CD4-positive, alpha-beta T cell (primary cell): ENCODE measurements at regions of chr5 and their contacts with region 1.

Region 1: GRCh38 chr5:157540707-157541446 is 34.7 kb downstream of the ADAM19 start:
- DNase-seq: peak in 10 of 14 experiments; percentile 5 to 74 (median 22)
- ATAC-seq: peak; percentile 61
- H3K4me3 ChIP-seq: peak overlapping the region; percentile 42
- H3K4me3 Mint-ChIP-seq: peak overlapping the region; percentile 62
- H3K27ac ChIP-seq: peak overlapping the region; percentile 61 to 83
- H3K27ac Mint-ChIP-seq: peak overlapping the region; percentile 87
- H3K4me1 ChIP-seq: peaks cover 73% of the 10 kb centered on the region
- H3K4me1 Mint-ChIP-seq: peaks cover 76% of the 10 kb centered on the region
- H3K27me3 ChIP-seq: no peaks in the 10 kb centered on the region
- H3K27me3 Mint-ChIP-seq: no peaks in the 10 kb centered on the region
- CTCF ChIP-seq: no peak

Region 2: DNA sequence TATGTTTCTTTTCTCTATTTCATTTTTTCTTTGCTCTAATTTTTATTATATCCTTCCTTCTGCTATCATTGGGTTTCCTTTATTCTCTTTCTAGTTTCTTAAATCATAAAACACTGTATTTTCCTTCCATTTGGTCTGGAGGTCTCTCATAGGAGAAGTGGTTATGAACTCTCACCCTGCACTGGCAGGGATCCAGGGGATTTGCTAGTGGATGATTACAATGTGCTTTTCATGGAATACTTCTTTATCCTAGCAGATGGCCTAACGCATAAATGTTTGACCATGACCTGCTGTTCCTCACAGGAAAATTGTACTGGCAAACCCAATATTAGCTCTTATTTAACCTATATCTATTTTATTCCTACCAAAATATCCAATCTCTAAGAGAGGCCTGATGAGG is 1245.4 kb before region 1 on chr5:
- CTCF ChIA-PET with region 1: no interaction called
- POLR2A ChIA-PET with region 1: no interaction called
- intact Hi-C with region 1: no loop called
- DNase-seq: no peak
- ATAC-seq: no peak
- H3K4me3 ChIP-seq: no peak overlapping the region
- H3K4me3 Mint-ChIP-seq: no peak overlapping the region
- H3K27ac ChIP-seq: no peak overlapping the region
- H3K27ac Mint-ChIP-seq: no peak overlapping the region
- H3K4me1 ChIP-seq: no peaks in the 10 kb centered on the region
- H3K4me1 Mint-ChIP-seq: no peaks in the 10 kb centered on the region
- H3K27me3 ChIP-seq: no peaks in the 10 kb centered on the region
- H3K27me3 Mint-ChIP-seq: no peaks in the 10 kb centered on the region
- CTCF ChIP-seq: no peak

Region 3: DNA sequence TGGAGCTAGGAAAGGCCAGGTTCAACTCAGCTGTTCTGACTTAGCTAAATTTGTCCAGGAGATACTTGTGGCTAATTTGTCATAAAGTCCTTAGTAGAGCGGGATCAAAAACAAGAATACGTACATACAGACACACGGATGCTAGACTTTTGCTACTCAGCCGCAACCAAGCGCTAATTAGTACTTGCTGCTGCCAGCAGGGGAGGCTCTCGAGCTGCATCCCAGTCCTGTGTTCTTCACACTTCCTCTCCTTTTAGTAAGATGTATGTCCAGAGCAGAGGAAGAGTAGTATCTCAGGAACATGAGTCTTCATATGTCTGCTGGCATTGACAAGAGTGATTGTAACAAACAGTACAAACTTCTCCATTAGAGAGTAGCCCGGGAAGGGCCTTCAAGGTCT is 216.6 kb before region 1 on chr5:
- CTCF ChIA-PET with region 1: no interaction called
- POLR2A ChIA-PET with region 1: no interaction called
- intact Hi-C with region 1: no loop called
- DNase-seq: peak in 2 of 14 experiments; percentile 23 to 29
- ATAC-seq: no peak
- H3K4me3 ChIP-seq: no peak overlapping the region
- H3K4me3 Mint-ChIP-seq: no peak overlapping the region
- H3K27ac ChIP-seq: no peak overlapping the region
- H3K27ac Mint-ChIP-seq: peak overlapping the region; percentile 49
- H3K4me1 ChIP-seq: peaks cover 19% of the 10 kb centered on the region
- H3K4me1 Mint-ChIP-seq: peaks cover 27% of the 10 kb centered on the region
- H3K27me3 ChIP-seq: no peaks in the 10 kb centered on the region
- H3K27me3 Mint-ChIP-seq: no peaks in the 10 kb centered on the region
- CTCF ChIP-seq: peak; percentile 23

Region 4: GRCh38 chr5:157449011-157449723 is 91.7 kb before region 1 on chr5:
- CTCF ChIA-PET with region 1: no interaction called
- POLR2A ChIA-PET with region 1: no interaction called
- intact Hi-C with region 1: no loop called
- DNase-seq: no peak
- ATAC-seq: no peak
- H3K4me3 ChIP-seq: no peak overlapping the region
- H3K4me3 Mint-ChIP-seq: no peak overlapping the region
- H3K27ac ChIP-seq: no peak overlapping the region
- H3K27ac Mint-ChIP-seq: no peak overlapping the region
- H3K4me1 ChIP-seq: no peaks in the 10 kb centered on the region
- H3K4me1 Mint-ChIP-seq: no peaks in the 10 kb centered on the region
- H3K27me3 ChIP-seq: no peaks in the 10 kb centered on the region
- H3K27me3 Mint-ChIP-seq: no peaks in the 10 kb centered on the region
- CTCF ChIP-seq: no peak

Region 5: GRCh38 chr5:157575381-157576020 is 34.6 kb after region 1 on chr5 and contains the start of gene ADAM19:
- CTCF ChIA-PET with region 1: interaction called, 3 read pairs
- POLR2A ChIA-PET with region 1: interaction called, 16 read pairs
- intact Hi-C with region 1: loop called in 1 of 2 experiments (anchors 5 kb)
- DNase-seq: peak in 9 of 14 experiments; percentile 22 to 79 (median 54)
- ATAC-seq: peak; percentile 70
- H3K4me3 ChIP-seq: peak within 1 kb of the TSS; percentile 98
- H3K4me3 Mint-ChIP-seq: peak within 1 kb of the TSS; percentile 89
- H3K27ac ChIP-seq: peak within 1 kb of the TSS; percentile 37 to 64
- H3K27ac Mint-ChIP-seq: peak within 1 kb of the TSS; percentile 76
- H3K4me1 ChIP-seq: peaks cover 47% of the 10 kb centered on the region
- H3K4me1 Mint-ChIP-seq: peaks cover 49% of the 10 kb centered on the region
- H3K27me3 ChIP-seq: peaks cover 0 to 3% of the 10 kb centered on the region in 2 experiments
- H3K27me3 Mint-ChIP-seq: no peaks in the 10 kb centered on the region
- CTCF ChIP-seq: no peak
- total RNA-seq, gene ADAM19: 26.7 to 29.1 TPM

Region 6: GRCh38 chr5:157603333-157604190 is 62.7 kb after region 1 on chr5:
- CTCF ChIA-PET with region 1: no interaction called
- POLR2A ChIA-PET with region 1: interaction called, 5 read pairs
- intact Hi-C with region 1: loop called in 1 of 2 experiments (anchors 2 kb)
- DNase-seq: peak; percentile 32 to 92 (median 56)
- ATAC-seq: peak; percentile 85
- H3K4me3 ChIP-seq: peak overlapping the region; percentile 11
- H3K4me3 Mint-ChIP-seq: peak overlapping the region; percentile 26
- H3K27ac ChIP-seq: peak overlapping the region; percentile 43 to 76
- H3K27ac Mint-ChIP-seq: peak overlapping the region; percentile 84
- H3K4me1 ChIP-seq: peaks cover 62% of the 10 kb centered on the region
- H3K4me1 Mint-ChIP-seq: peaks cover 53% of the 10 kb centered on the region
- H3K27me3 ChIP-seq: no peaks in the 10 kb centered on the region
- H3K27me3 Mint-ChIP-seq: no peaks in the 10 kb centered on the region
- CTCF ChIP-seq: no peak

Region 7: DNA sequence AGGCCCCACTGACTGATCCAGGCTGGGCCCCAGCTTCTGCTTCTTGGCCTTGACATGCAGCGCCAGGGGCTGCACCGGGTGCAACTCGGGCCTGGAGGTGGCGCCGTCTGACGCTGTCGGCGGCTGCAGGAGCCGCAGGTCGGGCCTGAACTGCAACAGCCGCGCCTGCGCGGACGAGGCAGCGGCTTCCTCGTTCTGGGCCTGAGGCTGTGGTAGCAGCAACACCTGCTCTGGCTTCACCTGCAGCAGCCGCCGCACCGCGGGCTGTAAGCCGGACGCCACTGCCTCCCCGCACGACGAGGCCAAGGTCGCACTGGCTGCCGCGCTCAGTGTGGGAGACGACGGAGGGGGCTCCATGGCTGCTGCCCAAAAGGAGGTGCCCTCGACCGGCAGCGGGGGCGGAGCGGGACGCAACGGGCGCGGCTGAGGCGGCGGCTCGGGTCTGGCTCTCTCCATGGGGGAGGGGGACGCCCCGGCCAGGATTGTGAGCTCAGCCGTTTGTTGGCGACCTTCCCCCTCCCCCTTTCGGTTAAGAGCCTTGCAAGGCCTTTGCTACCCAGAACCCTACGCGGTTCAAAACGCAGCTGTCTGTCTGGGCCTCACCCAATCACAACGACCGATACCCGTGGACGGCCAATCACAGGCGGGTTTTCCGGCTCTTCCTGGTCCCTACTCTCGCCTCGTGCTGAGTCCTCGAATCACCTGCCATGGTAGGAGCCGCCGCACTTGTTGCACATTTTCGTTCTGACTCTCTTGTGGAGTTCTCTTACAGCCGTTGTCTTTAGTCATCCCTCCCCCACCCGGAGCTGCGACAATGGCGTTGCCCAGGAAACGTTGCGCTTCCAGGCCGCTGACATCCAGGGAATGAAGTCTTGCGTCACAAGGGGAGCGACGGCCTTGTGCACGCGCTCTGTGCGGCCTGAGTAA is 111.0 kb after region 1 on chr5 and contains the start of gene SOX30:
- CTCF ChIA-PET with region 1: no interaction called
- POLR2A ChIA-PET with region 1: interaction called, 3 read pairs
- intact Hi-C with region 1: loop called in 1 of 2 experiments (anchors 5 kb)
- DNase-seq: peak; percentile 70 to 94 (median 81)
- ATAC-seq: peak; percentile 99
- H3K4me3 ChIP-seq: peak within 1 kb of the TSS; percentile 49
- H3K4me3 Mint-ChIP-seq: peak within 1 kb of the TSS; percentile 81
- H3K27ac ChIP-seq: peak within 1 kb of the TSS in 1 of 2 donors; percentile 13
- H3K27ac Mint-ChIP-seq: peak within 1 kb of the TSS; percentile 78
- H3K4me1 ChIP-seq: peaks cover 17% of the 10 kb centered on the region
- H3K4me1 Mint-ChIP-seq: peaks cover 21% of the 10 kb centered on the region
- H3K27me3 ChIP-seq: no peaks in the 10 kb centered on the region
- H3K27me3 Mint-ChIP-seq: no peaks in the 10 kb centered on the region
- CTCF ChIP-seq: peak; percentile 51
- total RNA-seq, gene SOX30: not detected

Region 8: DNA sequence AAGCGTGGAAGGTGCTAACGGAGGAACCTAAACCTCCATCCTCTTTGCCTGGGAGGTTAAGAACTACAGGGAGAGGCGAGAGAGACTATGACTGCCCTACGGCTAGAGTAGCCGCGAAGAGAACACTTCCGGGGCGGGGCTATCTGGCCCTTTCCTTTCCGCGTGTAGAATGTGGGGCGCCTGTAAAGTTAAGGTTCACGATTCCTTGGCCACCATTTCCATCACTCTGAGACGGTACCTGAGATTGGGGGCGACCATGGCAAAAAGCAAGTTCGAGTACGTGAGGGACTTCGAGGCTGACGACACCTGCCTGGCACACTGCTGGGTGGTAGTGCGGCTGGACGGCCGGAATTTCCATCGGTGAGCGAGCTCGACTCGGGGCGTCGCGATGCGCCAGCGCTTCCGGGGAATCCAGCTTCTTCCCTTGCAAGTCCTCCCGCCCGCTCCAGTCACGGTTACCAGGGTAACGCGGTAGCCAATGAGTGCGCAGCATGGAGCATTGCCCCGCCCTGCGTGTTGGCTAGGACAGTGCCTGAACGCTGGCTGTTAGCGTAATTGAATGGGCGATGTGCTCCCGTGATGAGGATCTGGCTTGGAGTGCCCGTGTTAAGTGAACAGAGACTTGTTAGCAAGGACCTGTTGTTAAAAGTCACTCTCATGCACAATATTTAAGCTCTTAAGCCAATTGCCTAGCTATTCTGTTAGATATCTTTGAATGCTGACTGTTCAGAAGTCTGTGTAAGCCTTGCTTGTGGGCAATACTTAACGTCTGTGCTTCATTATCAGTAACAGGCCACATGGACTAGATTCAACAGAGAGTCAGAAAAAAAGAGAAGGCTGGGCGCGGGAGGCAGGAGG is 190.6 kb after region 1 on chr5 and contains the start of gene THG1L:
- CTCF ChIA-PET with region 1: no interaction called
- POLR2A ChIA-PET with region 1: no interaction called
- intact Hi-C with region 1: loop called in 1 of 2 experiments (anchors 5 kb)
- DNase-seq: peak; percentile 94 to 99 (median 97)
- ATAC-seq: peak; percentile 97
- H3K4me3 ChIP-seq: peak within 1 kb of the TSS; percentile 90
- H3K4me3 Mint-ChIP-seq: peak within 1 kb of the TSS; percentile 94
- H3K27ac ChIP-seq: peak within 1 kb of the TSS; percentile 79 to 89
- H3K27ac Mint-ChIP-seq: peak within 1 kb of the TSS; percentile 91
- H3K4me1 ChIP-seq: peaks cover 9% of the 10 kb centered on the region
- H3K4me1 Mint-ChIP-seq: peaks cover 16% of the 10 kb centered on the region
- H3K27me3 ChIP-seq: no peaks in the 10 kb centered on the region
- H3K27me3 Mint-ChIP-seq: no peaks in the 10 kb centered on the region
- CTCF ChIP-seq: no peak
- total RNA-seq, gene THG1L: 4.1 to 4.6 TPM